Panc1 (cell line): ENCODE measurements at regions of chr10 and their contacts with region 1.

Region 1: DNA sequence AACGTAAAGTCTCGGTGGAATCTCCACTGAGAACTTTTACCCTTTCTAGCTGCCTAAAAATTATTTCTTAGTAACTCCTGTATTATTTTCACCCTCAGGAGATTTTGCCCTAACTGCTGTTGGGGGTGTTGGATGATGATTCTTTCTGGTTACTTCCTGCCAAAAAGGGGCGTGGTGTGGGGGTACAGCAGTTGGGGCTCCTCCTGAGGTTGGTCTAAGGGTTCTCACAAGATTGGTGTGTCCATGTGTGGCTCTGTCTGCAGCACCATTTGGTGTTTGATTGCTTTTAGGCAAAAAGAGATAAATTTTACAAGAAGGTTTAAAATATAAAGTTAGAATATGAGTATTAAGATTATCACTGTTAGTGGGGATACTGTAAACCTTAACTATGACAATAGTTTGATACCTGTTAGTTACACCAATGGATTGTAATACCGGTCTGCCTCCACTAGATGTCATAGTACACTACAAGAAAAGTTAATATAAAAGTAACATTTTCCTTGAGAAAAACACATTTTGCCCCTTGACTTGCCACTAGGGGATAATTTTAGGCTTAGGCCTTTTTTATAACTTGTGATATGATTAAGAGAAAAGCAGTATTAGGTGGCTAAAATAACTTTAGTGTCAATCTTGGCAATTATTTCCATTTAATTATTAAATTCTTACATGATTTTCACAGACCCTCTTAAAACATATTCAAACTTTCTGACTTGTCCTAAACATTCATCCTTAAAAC is 928.7 kb downstream of the IPMK start:
- DNase-seq: peak; percentile 17
- ATAC-seq: 0 out of 2 replicates have a peak, but pooled peaks have one; percentile 48
- H3K4me3 ChIP-seq: no peak overlapping the region
- H3K27ac ChIP-seq: no peak overlapping the region
- H3K4me1 ChIP-seq: no peaks in the 10 kb centered on the region
- H3K27me3 ChIP-seq: 0 out of 2 replicates have a peak, but pooled peaks cover 2% of the 10 kb centered on the region
- CTCF ChIP-seq: peak; percentile 78

Region 2: GRCh38 chr10:57294698-57295097 is 44.3 kb before region 1 on chr10:
- CTCF ChIA-PET with region 1: no interaction called
- POLR2A ChIA-PET with region 1: no interaction called
- in situ Hi-C with region 1: no loop called
- intact Hi-C with region 1: no loop called
- DNase-seq: no peak
- ATAC-seq: no peak
- H3K4me3 ChIP-seq: no peak overlapping the region
- H3K27ac ChIP-seq: no peak overlapping the region
- H3K4me1 ChIP-seq: no peaks in the 10 kb centered on the region
- H3K27me3 ChIP-seq: no peaks in the 10 kb centered on the region
- CTCF ChIP-seq: no peak

Region 3: GRCh38 chr10:57513637-57514036 is 174.6 kb after region 1 on chr10:
- CTCF ChIA-PET with region 1: no interaction called
- POLR2A ChIA-PET with region 1: no interaction called
- in situ Hi-C with region 1: no loop called
- intact Hi-C with region 1: no loop called
- DNase-seq: no peak
- ATAC-seq: no peak
- H3K4me3 ChIP-seq: no peak overlapping the region
- H3K27ac ChIP-seq: no peak overlapping the region
- H3K4me1 ChIP-seq: no peaks in the 10 kb centered on the region
- H3K27me3 ChIP-seq: no peaks in the 10 kb centered on the region
- CTCF ChIP-seq: no peak

Region 4: GRCh38 chr10:57593983-57594573 is 255.1 kb after region 1 on chr10:
- CTCF ChIA-PET with region 1: no interaction called
- POLR2A ChIA-PET with region 1: no interaction called
- in situ Hi-C with region 1: no loop called
- intact Hi-C with region 1: loop called (anchors 10 kb)
- DNase-seq: no peak
- ATAC-seq: no peak
- H3K4me3 ChIP-seq: no peak overlapping the region
- H3K27ac ChIP-seq: no peak overlapping the region
- H3K4me1 ChIP-seq: no peaks in the 10 kb centered on the region
- H3K27me3 ChIP-seq: no peaks in the 10 kb centered on the region
- CTCF ChIP-seq: no peak; the same call in 1 of the 2 replicates

Region 5: DNA sequence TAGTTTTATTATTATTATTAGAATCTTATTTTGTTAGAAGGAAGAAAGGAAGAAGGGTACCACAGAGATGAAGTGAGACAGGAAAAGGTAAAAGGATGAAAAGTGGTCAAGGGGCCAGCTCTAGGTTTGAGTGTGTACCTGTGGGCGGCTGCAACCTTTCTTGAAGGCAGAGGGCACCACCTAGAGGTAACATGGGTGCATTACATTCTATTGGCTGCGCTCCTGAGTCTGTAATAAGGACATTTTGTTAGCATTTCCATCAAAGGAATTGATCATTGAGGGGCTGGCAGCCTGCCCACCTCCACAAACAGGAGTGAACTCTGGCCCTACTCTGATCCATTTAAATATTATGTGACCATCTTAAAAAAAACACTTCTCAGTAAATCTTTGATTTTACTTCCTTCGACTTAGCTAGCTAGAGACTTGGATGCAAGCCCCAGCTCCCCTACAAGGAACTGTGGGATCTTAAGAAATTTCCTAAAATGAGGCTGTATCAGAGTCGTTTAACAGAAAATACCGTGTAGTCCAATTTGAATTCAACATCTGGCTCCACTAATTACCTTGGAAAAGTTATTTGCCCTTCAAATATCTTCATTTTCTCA is 318.3 kb after region 1 on chr10:
- CTCF ChIA-PET with region 1: no interaction called
- POLR2A ChIA-PET with region 1: no interaction called
- in situ Hi-C with region 1: no loop called
- intact Hi-C with region 1: loop called (anchors 1 kb)
- DNase-seq: peak; percentile 48
- ATAC-seq: peak; percentile 89
- H3K4me3 ChIP-seq: no peak overlapping the region
- H3K27ac ChIP-seq: no peak overlapping the region
- H3K4me1 ChIP-seq: no peaks in the 10 kb centered on the region
- H3K27me3 ChIP-seq: no peaks in the 10 kb centered on the region
- CTCF ChIP-seq: peak; percentile 94

Region 6: GRCh38 chr10:57849691-57850357 is 510.8 kb after region 1 on chr10:
- CTCF ChIA-PET with region 1: no interaction called
- POLR2A ChIA-PET with region 1: no interaction called
- in situ Hi-C with region 1: no loop called
- intact Hi-C with region 1: loop called (anchors 10 kb)
- DNase-seq: peak; percentile 5
- ATAC-seq: no peak
- H3K4me3 ChIP-seq: no peak overlapping the region
- H3K27ac ChIP-seq: no peak overlapping the region
- H3K4me1 ChIP-seq: no peaks in the 10 kb centered on the region
- H3K27me3 ChIP-seq: no peaks in the 10 kb centered on the region
- CTCF ChIP-seq: peak; percentile 52; the same call in 1 of the 2 replicates

Region 7: DNA sequence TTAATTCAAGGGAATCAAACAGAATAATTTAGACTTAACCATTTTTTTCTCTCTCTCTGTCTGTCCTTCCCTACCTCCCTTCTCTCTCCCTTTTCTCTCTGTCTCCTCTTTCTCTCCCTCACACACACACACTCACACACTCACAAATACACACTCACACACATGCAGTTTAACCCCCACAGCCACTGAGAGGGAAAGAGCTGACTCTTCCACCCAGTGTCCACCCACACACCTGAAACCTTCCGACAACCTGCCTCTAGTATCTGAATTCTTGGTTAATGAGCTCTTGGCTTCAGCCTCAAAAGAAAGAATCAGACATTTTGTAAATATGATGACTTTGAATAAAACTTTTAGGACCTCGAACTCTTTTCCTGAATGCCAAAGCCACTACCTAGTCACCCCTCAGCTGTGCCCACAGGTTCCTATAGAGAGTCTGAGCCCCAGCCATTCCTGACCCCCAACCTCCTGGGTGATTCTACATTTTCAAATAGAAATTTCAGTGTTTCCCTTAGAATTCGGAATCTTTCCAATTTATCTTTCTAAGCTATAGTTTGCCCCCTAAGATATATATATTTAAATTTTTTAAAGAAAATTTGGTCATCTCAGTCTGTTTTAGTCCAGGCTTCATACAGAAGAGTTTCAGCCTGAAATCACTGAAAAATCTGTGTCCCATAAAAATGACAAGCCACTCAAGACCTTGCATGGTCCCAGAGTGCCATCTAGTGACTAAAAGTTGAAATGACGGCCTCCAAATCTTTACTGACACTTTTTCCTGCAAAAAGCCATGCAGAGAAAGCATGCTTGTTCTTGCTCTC is 725.9 kb after region 1 on chr10:
- CTCF ChIA-PET with region 1: no interaction called
- POLR2A ChIA-PET with region 1: no interaction called
- in situ Hi-C with region 1: no loop called
- intact Hi-C with region 1: loop called (anchors 1 kb)
- DNase-seq: peak; percentile 45
- ATAC-seq: peak; percentile 65; the same call in 1 of the 2 replicates
- H3K4me3 ChIP-seq: no peak overlapping the region
- H3K27ac ChIP-seq: no peak overlapping the region
- H3K4me1 ChIP-seq: no peaks in the 10 kb centered on the region
- H3K27me3 ChIP-seq: 0 out of 2 replicates have a peak, but pooled peaks cover 2% of the 10 kb centered on the region
- CTCF ChIP-seq: peak; percentile 91

Region 8: GRCh38 chr10:58152673-58153263 is 813.8 kb after region 1 on chr10:
- CTCF ChIA-PET with region 1: no interaction called
- POLR2A ChIA-PET with region 1: no interaction called
- in situ Hi-C with region 1: no loop called
- intact Hi-C with region 1: loop called (anchors 10 kb)
- DNase-seq: no peak
- ATAC-seq: 0 out of 2 replicates have a peak, but pooled peaks have one; percentile 53
- H3K4me3 ChIP-seq: no peak overlapping the region
- H3K27ac ChIP-seq: no peak overlapping the region
- H3K4me1 ChIP-seq: no peaks in the 10 kb centered on the region
- H3K27me3 ChIP-seq: 0 out of 2 replicates have a peak, but pooled peaks cover 2% of the 10 kb centered on the region
- CTCF ChIP-seq: peak; percentile 82

Region 9: GRCh38 chr10:58743466-58744115 is 1404.6 kb after region 1 on chr10:
- CTCF ChIA-PET with region 1: no interaction called
- POLR2A ChIA-PET with region 1: no interaction called
- in situ Hi-C with region 1: no loop called
- intact Hi-C with region 1: no loop called
- DNase-seq: no peak
- ATAC-seq: no peak
- H3K4me3 ChIP-seq: no peak overlapping the region
- H3K27ac ChIP-seq: no peak overlapping the region
- H3K4me1 ChIP-seq: no peaks in the 10 kb centered on the region
- H3K27me3 ChIP-seq: no peaks in the 10 kb centered on the region
- CTCF ChIP-seq: no peak